Activated CD4-positive, alpha-beta memory T cell treated with anti-CD3 and anti-CD28 coated beads for 36 hours (primary cell): ENCODE measurements at regions of chr12 and their contacts with region 1.

Region 1: DNA sequence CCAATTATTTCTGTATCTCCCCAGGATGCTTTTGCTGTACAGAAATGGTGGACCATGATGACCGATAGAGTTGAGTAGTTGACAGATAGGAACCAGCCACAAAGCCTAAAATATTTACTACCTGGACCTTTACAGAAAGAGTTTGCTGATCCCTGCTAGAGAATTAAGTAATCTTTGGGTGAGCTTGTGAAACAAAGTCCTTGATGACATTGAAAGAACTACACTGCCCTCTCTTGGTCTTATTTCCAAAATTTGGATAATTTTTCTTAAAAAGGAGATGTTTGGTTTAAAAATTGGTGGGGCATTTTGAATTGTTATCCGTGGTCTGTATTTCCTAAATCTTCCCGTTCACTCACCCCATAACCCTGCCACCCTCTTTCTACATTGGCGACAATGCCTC is 13.7 kb upstream of the TCTN1 start:
- DNase-seq: no peak
- H3K4me3 Mint-ChIP-seq: no peak overlapping the region
- H3K27ac Mint-ChIP-seq: peak overlapping the region; percentile 16
- H3K4me1 Mint-ChIP-seq: peaks cover 4% of the 10 kb centered on the region
- H3K27me3 Mint-ChIP-seq: no peaks in the 10 kb centered on the region

Region 2: DNA sequence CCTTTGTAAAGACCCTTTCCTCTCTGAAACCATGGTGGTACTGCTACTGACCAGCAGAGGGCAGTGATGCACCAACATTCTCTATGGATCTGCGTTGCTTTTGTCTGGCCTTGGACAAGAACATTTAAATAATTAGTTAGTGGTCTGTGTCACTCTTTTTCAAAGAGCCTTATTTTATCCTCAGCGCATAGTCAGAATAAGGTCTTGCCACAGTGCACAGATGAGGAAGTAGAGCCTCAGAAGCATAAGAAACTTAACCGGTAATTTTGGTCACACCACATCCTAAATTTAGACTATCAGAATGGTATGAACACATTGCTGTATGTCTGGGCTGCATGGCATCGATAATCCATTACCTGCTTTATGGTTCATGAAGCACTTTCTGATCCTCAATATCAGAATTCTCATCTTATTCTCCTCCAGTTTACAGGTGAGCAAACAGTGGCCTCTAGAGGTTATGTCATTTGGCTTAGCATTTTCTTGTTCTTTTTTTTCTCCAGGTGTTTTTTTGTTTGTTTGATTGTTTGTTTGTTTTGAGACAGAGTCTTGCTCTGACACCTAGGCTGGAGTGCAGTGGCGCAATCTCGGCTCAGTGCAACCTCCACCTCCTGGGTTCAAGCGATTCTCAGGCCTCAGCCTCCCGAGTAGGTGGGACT is 499.8 kb before region 1 on chr12:
- CTCF ChIA-PET with region 1: interaction called, 3 read pairs
- POLR2A ChIA-PET with region 1: no interaction called
- intact Hi-C with region 1: loop called (anchors 5 kb)
- DNase-seq: peak; percentile 70
- H3K4me3 Mint-ChIP-seq: no peak overlapping the region
- H3K27ac Mint-ChIP-seq: peak overlapping the region; percentile 0
- H3K4me1 Mint-ChIP-seq: peaks cover 7% of the 10 kb centered on the region
- H3K27me3 Mint-ChIP-seq: no peaks in the 10 kb centered on the region

Region 3: DNA sequence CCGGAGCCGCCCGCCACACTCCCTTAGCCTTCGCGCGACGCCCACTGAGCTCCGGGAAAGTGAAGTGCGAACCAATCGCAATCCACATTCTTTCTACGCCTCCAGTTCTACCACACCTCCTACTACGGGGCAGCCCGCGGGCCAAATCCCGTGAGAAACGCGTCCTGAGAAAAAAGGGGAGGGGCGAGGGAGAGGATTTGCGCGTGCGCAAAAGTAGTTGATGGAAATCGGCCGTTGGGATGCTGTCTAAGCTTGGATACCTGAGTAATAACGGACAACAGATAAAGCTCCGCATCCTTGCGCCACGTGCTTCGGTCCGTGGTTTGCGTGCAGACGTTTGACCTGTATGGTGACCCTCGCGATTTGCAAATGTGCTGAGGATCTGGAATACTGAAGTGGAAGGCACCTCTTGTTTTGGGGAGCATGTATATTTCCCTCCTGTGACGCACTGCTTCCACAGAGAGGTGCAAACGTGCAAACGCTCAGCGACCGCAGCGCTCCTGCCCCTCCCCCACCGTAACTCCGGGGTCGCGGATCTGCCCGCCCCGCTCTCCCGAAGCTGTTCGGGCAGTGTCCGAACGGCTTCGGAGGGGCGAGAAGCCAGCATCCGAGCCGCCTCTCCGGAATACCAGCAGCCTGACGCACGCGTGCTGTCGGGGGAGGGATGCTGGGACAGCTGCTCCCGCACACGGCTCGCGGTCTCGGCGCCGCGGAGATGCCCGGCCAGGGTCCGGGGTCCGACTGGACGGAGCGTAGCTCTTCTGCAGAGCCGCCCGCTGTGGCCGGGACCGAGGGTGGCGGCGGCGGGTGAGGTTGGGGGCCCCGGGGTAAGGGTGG is 131.8 kb before region 1 on chr12 and contains the starts of genes FAM216A and GPN3:
- CTCF ChIA-PET with region 1: interaction called, 86 read pairs
- POLR2A ChIA-PET with region 1: interaction called, 16 read pairs
- intact Hi-C with region 1: loop called (anchors 1 kb)
- DNase-seq: peak; percentile 98
- H3K4me3 Mint-ChIP-seq: peak within 1 kb of the TSS; percentile 98
- H3K27ac Mint-ChIP-seq: peak within 1 kb of the TSS; percentile 97
- H3K4me1 Mint-ChIP-seq: peaks cover 28% of the 10 kb centered on the region
- H3K27me3 Mint-ChIP-seq: no peaks in the 10 kb centered on the region
- total RNA-seq, gene FAM216A: 29.8 to 30.0 TPM
- total RNA-seq, gene GPN3: 62.4 to 68.4 TPM

Region 4: GRCh38 chr12:110513842-110514241 is 86.4 kb before region 1 on chr12:
- CTCF ChIA-PET with region 1: interaction called, 189 read pairs
- POLR2A ChIA-PET with region 1: no interaction called
- intact Hi-C with region 1: loop called (anchors 1 kb)
- DNase-seq: no peak
- H3K4me3 Mint-ChIP-seq: no peak overlapping the region
- H3K27ac Mint-ChIP-seq: no peak overlapping the region
- H3K4me1 Mint-ChIP-seq: no peaks in the 10 kb centered on the region
- H3K27me3 Mint-ChIP-seq: no peaks in the 10 kb centered on the region

Region 5: DNA sequence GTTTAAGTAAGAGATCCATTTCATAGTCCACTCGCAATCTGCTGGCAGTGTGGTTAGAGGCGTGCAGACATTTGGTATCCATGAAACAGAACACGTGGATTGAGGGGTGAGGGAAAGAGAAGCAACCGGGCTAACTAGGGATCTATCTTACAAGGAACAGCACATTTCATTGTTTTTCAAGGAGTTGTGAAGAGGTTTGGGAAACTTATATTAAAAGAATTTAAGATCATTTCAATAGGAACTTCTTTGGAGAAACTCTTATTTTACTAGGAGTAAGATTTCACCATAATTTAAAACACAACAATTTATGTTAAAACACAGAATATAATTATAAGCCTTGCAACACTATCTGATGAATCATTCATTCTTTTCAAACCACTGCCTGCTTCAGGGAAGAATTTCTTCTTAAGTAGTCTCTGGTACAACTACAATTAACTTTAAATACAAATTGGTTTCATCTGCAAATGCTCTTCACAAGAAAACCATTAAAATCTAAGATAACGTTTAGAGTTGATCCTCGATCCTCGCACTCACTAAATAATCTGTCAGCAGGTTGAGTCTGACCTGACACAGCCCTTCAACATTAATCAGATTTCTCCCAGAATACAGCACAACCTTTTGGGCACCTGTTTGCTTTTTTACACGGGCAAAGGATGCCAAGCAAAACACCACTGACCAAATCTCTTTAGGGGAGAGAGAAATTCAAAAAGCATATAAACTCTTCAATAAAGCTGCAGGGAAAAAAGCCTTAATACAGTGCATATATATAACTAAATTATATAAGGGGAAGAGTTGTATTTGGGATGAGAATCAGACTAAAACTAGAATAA is 44.5 kb before region 1 on chr12:
- CTCF ChIA-PET with region 1: interaction called, 176 read pairs
- POLR2A ChIA-PET with region 1: interaction called, 3 read pairs
- intact Hi-C with region 1: loop called (anchors 1 kb)
- DNase-seq: no peak
- H3K4me3 Mint-ChIP-seq: no peak overlapping the region
- H3K27ac Mint-ChIP-seq: no peak overlapping the region
- H3K4me1 Mint-ChIP-seq: peaks cover 46% of the 10 kb centered on the region
- H3K27me3 Mint-ChIP-seq: no peaks in the 10 kb centered on the region

Region 6: GRCh38 chr12:110583137-110584059 is 16.9 kb before region 1 on chr12 and contains the start of gene PPTC7:
- CTCF ChIA-PET with region 1: interaction called, 48 read pairs
- POLR2A ChIA-PET with region 1: no interaction called
- intact Hi-C with region 1: no loop called
- DNase-seq: peak; percentile 99
- H3K4me3 Mint-ChIP-seq: peak within 1 kb of the TSS; percentile 94
- H3K27ac Mint-ChIP-seq: peak within 1 kb of the TSS; percentile 94
- H3K4me1 Mint-ChIP-seq: peaks cover 59% of the 10 kb centered on the region
- H3K27me3 Mint-ChIP-seq: no peaks in the 10 kb centered on the region
- total RNA-seq, gene PPTC7: 36.9 to 37.0 TPM

Region 7: GRCh38 chr12:110639336-110640141 is 39.3 kb after region 1 on chr12:
- CTCF ChIA-PET with region 1: no interaction called
- POLR2A ChIA-PET with region 1: no interaction called
- intact Hi-C with region 1: no loop called
- DNase-seq: no peak
- H3K4me3 Mint-ChIP-seq: no peak overlapping the region
- H3K27ac Mint-ChIP-seq: no peak overlapping the region
- H3K4me1 Mint-ChIP-seq: peaks cover 11% of the 10 kb centered on the region
- H3K27me3 Mint-ChIP-seq: no peaks in the 10 kb centered on the region

Region 8: GRCh38 chr12:110888256-110888991 is 288.2 kb after region 1 on chr12:
- CTCF ChIA-PET with region 1: interaction called, 14 read pairs
- POLR2A ChIA-PET with region 1: no interaction called
- intact Hi-C with region 1: no loop called
- DNase-seq: no peak
- H3K4me3 Mint-ChIP-seq: no peak overlapping the region
- H3K27ac Mint-ChIP-seq: no peak overlapping the region
- H3K4me1 Mint-ChIP-seq: peaks cover 4% of the 10 kb centered on the region
- H3K27me3 Mint-ChIP-seq: peaks cover 5% of the 10 kb centered on the region